ENCODE measurements at regions of chr5 and their contacts with region 1.

Region 1: GRCh38 chr5:174935854-174936474 is 211.6 kb downstream of the MSX2 start:
- DNase-seq: peak; percentile 57 to 90
- H3K4me3 ChIP-seq: no peak overlapping the region
- H3K27ac ChIP-seq: no peak overlapping the region
- H3K4me1 ChIP-seq: no peaks in the 10 kb centered on the region
- H3K27me3 ChIP-seq: no peaks in the 10 kb centered on the region
- CTCF ChIP-seq: peak; percentile 92 to 95 (median 94)
- EP300 ChIP-seq: no peak
- POLR2A ChIP-seq: no peak
- RAD21 ChIP-seq: peak; percentile 97

Region 2: DNA sequence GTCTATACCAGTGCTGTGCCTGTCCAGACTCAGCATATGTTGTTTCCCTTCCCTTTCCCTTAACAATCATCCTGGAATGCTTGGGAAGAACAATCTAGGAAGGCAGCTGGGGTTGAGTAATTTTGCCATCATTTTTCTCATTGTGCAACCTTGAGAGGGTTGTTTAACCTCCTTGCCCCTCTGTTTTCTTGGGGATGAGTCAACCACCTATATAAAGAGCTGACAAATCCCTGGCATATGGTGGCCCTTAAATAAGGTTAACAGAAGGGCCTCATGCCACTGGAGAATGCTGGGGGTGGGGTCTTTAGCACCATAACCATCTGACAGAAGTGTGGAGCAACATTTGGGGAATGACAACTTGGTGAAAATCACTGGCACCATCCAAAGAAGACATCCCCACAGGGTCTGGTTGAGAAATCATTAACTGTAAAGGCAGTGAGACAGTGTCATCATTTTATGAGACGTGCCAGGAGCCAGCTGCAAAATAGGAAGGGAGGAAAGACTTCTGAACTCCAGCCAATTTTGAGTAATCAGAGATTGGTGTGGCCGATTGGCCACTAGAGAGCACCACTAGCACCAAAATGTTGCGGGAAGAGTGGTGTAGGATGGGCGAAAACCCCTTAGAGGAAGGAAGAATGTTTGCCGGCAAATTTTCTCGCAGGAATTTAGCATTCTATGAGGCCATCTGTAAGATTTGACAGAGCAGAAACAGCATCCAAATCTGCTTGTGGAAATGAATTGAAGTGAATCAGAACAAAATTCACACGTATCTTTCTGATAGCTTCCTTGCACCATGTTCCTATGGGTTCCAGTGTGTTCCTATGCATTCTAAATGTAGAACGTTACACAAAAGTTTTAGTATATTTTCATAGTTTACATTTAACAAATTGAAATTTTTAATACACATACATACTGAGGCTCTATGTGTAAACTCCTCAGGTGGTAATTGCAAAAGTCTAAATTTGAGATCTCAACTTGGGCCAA is 97.8 kb before region 1 on chr5:
- CTCF ChIA-PET with region 1: interaction called, 11 read pairs
- POLR2A ChIA-PET with region 1: no interaction called
- DNase-seq: peak in 1 of 2 experiments; percentile 53
- H3K4me3 ChIP-seq: no peak overlapping the region
- H3K27ac ChIP-seq: no peak overlapping the region
- H3K4me1 ChIP-seq: peaks cover 0 to 1% (median 0%) of the 10 kb centered on the region in 4 experiments; a peak in 1 of 7 replicates
- H3K27me3 ChIP-seq: no peaks in the 10 kb centered on the region
- CTCF ChIP-seq: peak; percentile 35 to 74 (median 72)
- EP300 ChIP-seq: no peak
- POLR2A ChIP-seq: no peak
- RAD21 ChIP-seq: peak; percentile 68 to 75

Region 3: DNA sequence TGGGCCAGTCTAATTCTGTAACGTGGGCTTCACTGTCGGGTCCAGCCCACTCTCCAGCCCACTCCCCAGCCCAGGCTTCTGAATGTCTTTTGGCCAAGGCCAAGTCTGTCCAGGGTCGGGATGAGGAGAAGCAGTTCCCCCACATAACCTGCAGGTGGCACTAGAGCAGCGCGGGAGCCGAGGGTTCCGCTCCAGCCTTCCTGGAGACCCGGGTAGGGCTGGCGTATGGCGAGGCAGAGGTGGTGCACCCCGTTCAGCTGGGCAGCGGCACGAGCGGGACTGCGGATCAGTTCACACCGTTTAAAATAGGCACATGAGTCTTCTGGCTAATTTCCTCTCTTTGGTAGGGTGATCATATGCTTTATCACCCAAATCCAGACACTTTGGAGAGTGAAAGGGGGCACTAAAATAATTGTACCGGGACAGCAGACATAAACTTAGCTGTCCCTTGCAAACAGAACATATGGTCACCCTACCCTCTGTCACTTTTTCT is 25.7 kb before region 1 on chr5:
- CTCF ChIA-PET with region 1: interaction called, 95 read pairs
- POLR2A ChIA-PET with region 1: no interaction called
- DNase-seq: peak; percentile 59 to 92
- H3K4me3 ChIP-seq: no peak overlapping the region
- H3K27ac ChIP-seq: no peak overlapping the region
- H3K4me1 ChIP-seq: no peaks in the 10 kb centered on the region
- H3K27me3 ChIP-seq: 0 out of 7 replicates have a peak, but pooled peaks cover 0 to 3% (median 0%) of the 10 kb centered on the region in 4 experiments
- CTCF ChIP-seq: peak; percentile 84 to 92 (median 90)
- EP300 ChIP-seq: no peak
- POLR2A ChIP-seq: no peak
- RAD21 ChIP-seq: peak; percentile 96 to 97